Heart right ventricle (tissue), 16 donors: ENCODE measurements at regions of chr19 and their contacts with region 1.

Region 1: DNA sequence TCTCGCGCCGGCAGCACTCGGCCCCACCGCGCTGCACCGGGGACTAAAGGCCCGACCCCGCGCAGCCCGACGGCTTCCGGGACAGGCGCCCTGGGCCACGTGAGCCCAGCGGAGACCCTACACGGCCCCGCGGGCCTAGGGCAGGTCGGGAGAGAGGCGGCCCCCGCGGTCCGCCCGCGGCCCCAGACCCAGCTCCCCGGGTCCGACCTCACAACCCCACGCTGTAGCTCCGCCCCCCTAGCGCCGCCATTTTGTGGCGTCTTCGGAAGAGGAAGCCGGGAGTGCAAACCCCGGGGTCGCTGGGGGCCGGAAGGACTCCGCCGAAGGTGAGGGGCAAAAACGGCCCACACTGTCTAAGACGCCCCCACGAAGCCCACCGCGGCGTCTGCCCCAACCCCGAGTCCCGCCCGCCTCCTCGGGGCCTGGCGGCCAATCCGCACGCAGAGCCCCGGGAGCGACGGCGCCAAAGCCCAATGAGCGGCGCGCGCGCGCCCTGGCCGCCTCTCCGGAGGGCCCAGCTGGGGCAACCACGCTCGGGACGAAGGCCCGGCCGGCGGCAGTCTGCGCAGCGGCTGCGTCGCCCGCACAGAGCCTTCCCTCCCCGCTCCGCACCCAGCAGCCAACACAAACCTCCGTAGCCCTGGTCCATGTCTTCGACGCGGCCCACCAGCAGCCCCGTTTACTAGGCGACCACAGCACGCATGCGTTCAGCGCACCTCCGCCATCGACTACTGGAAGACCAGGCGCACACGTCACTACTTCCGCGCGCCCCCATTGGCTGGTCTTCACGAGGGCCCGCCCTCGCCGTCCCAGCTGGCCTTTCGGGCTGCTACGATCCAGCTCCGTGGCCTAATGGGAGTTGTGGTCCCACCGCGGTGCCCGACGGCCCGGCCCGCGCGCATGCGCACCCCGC is at the start of gene AKAP8:
- DNase-seq: peak; percentile 98 to 99
- ATAC-seq: peak; percentile 94 to 97 (median 97)
- H3K4me3 ChIP-seq: peak within 1 kb of the TSS; percentile 58 to 99 (median 90)
- H3K27ac ChIP-seq: peak within 1 kb of the TSS; percentile 93 to 99 (median 98)
- H3K4me1 ChIP-seq: peaks cover 26 to 50% (median 47%) of the 10 kb centered on the region in 9 donors
- H3K27me3 ChIP-seq: no peaks in the 10 kb centered on the region
- CTCF ChIP-seq: no peak
- total RNA-seq, gene AKAP8: 15.7 to 32.2 (median 18.6) TPM

Region 2: DNA sequence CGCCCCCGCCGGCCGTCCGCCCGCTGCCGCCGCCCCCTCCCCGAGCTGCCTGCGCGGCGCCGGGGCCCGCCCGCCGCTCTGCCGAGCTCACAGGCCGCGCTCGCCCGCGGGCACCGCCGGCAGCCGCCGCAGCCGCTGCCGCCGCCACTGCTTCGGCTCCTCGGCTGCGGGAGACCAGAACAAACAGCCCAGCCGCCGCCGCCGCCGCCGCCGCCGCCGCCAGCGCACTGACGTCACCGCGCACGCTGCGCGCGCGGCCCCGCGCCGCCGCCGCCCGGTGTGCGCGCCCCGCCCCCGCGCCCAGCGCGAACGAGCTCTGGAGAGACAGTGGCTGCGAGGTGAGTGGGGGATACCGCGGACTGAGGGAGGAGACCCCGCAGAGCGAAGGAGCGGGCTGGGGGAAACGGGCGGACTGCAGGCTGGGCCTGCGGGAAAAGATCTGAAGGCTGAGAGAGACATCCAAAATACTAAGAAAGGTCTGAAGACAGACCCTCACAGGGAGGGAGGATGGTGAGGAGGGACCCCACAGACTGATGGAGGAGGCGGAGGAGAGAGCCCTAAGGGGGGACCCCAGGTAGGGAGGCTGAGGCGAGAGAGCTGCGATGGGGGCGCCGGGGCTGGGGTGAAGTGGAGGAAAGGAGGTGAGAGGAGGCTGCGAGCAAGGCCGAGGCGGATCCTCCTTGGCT is 46.9 kb before region 1 on chr19 and contains the start of gene BRD4:
- intact Hi-C with region 1: loop called in 3 of 10 experiments (anchors 5 kb)
- DNase-seq: peak; percentile 64 to 80
- ATAC-seq: peak; percentile 69 to 86 (median 81)
- H3K4me3 ChIP-seq: peak within 1 kb of the TSS; percentile 90 to 99 (median 96)
- H3K27ac ChIP-seq: peak within 1 kb of the TSS; percentile 84 to 96 (median 93)
- H3K4me1 ChIP-seq: peaks cover 5 to 76% (median 55%) of the 10 kb centered on the region in 9 donors
- H3K27me3 ChIP-seq: no peaks in the 10 kb centered on the region
- CTCF ChIP-seq: no peak
- total RNA-seq, gene BRD4: 51.6 to 85.1 (median 54.7) TPM

Region 3: DNA sequence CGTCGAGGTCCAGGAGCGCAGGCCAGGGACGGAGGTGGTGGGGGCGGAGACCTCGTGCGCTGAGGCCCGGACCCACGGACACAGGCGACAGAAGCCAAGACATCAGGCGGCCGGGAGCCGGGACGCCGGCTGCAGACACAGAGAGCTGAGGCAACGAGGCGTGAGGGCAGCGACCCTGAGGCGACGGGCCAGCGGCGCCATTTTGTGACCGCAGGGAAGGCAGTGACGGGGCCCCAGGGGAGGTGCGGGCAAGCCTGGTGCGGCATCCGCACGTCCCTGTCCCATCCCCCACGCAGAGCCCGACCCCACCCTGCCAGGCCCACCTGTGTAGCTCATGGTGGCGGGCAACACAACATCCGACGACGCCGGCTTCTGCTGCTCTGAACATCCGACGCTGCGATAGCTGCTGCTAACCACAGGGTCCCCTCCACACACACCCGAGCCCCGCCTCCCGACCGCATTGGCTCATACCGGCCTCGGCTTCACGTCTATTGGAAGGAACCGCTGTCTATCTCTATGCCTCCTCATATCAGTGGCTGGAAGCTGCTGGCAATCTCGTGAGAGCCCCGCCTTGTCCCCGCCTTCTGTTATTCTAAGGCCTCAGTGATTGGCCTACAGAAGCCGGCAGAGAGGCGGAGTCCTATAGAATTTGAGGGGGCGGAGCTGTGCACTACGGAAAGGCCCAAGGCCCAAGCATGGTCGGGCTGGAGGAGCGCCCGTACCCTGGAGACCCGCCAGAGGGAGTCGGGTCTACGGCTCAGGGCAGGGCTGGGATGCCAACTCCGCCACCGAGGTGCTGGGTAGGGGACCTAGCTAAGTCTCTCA is 39.5 kb after region 1 on chr19 and contains the start of gene AKAP8L:
- intact Hi-C with region 1: loop called in 5 of 10 experiments (anchors 2 to 5 kb)
- DNase-seq: peak; percentile 97 to 100
- ATAC-seq: peak; percentile 95 to 98 (median 97)
- H3K4me3 ChIP-seq: peak within 1 kb of the TSS; percentile 69 to 99 (median 92)
- H3K27ac ChIP-seq: peak within 1 kb of the TSS; percentile 42 to 93 (median 90)
- H3K4me1 ChIP-seq: peaks cover 4 to 70% (median 36%) of the 10 kb centered on the region in 9 donors
- H3K27me3 ChIP-seq: no peaks in the 10 kb centered on the region
- CTCF ChIP-seq: peak; percentile 35 to 84 (median 70)
- total RNA-seq, gene AKAP8L: 45.2 to 101 (median 63.1) TPM

Region 4: GRCh38 chr19:15449620-15450527 is 70.5 kb after region 1 on chr19 and contains the start of gene WIZ:
- intact Hi-C with region 1: loop called in 1 of 10 experiments (anchors 5 kb)
- DNase-seq: peak; percentile 89 to 92
- ATAC-seq: peak in 6 of 8 donors; percentile 8 to 42 (median 24)
- H3K4me3 ChIP-seq: peak within 1 kb of the TSS; percentile 62 to 97 (median 77)
- H3K27ac ChIP-seq: peak within 1 kb of the TSS; percentile 78 to 93 (median 86)
- H3K4me1 ChIP-seq: peaks cover 12 to 44% (median 34%) of the 10 kb centered on the region in 9 donors
- H3K27me3 ChIP-seq: peaks cover 0 to 13% (median 6%) of the 10 kb centered on the region in 7 donors
- CTCF ChIP-seq: no peak
- total RNA-seq, gene WIZ: 19.5 to 34.3 (median 21.3) TPM